MCF 10A (cell line): ENCODE measurements at regions of chr14 and their contacts with region 1.

Region 1: DNA sequence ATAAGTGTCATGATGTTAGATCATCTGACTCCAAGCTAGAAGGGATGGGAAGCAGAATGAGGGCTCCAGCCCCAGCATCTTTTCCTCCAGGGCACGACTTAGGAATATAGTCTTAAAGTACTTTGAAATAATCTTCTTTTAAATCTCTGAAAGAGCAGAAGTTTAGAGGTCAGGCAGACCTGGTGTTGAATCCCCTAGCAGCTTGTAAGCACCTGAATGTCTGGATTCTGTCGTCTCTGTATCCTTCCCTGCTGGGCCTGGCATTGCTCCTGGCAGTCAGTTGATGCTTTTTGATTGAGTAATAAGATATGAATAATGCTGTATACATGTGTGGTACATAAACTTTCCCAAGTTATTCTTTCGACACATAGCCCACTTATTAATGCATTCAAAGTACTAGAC is 31.3 kb downstream of the EVL start:
- DNase-seq: peak; percentile 86
- H3K4me3 Mint-ChIP-seq: no peak overlapping the region
- H3K27ac Mint-ChIP-seq: peak overlapping the region; percentile 81
- H3K4me1 Mint-ChIP-seq: peaks cover 40% of the 10 kb centered on the region
- H3K27me3 Mint-ChIP-seq: no peaks in the 10 kb centered on the region
- CTCF ChIP-seq: no peak

Region 2: DNA sequence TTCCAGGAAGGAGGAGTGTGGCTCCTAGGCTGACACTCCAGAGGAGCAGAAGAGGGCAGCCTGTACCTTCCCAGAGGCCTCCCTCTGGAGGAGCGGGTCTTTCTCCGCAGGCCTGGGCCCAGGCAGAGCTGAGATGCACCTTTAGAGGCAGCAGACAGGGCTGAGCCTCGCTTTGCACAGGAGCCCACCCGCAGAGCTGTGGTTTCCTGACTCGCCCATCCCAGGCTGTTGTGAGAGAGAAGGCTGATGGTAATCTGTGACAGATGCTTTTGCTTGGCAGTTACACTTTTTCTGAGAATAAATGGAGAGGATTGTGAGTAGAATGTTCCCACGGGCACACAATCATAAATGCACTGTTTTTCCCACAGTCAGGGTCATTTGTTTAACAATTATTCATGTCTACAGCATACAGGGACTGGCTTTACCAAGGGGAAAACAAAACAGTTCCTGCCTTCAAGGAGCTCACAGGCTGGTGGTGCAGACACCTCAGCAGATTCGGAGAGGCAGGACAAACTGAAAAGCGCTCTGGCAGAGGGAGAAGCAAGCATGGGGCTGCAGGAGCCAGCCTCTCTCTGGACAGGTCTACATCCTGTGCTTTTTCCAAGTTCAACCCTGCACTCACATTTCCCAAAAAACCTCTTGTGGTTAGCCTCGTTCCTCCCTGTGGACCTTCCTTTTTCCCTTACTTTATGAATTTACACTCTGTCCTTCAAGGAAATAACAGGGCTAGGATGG is 17.4 kb before region 1 on chr14:
- CTCF ChIA-PET with region 1: interaction called, 15 read pairs
- POLR2A ChIA-PET with region 1: interaction called, 24 read pairs
- intact Hi-C with region 1: no loop called
- DNase-seq: peak; percentile 47
- H3K4me3 Mint-ChIP-seq: no peak overlapping the region
- H3K27ac Mint-ChIP-seq: no peak overlapping the region
- H3K4me1 Mint-ChIP-seq: peaks cover 31% of the 10 kb centered on the region
- H3K27me3 Mint-ChIP-seq: no peaks in the 10 kb centered on the region
- CTCF ChIP-seq: no peak

Region 3: DNA sequence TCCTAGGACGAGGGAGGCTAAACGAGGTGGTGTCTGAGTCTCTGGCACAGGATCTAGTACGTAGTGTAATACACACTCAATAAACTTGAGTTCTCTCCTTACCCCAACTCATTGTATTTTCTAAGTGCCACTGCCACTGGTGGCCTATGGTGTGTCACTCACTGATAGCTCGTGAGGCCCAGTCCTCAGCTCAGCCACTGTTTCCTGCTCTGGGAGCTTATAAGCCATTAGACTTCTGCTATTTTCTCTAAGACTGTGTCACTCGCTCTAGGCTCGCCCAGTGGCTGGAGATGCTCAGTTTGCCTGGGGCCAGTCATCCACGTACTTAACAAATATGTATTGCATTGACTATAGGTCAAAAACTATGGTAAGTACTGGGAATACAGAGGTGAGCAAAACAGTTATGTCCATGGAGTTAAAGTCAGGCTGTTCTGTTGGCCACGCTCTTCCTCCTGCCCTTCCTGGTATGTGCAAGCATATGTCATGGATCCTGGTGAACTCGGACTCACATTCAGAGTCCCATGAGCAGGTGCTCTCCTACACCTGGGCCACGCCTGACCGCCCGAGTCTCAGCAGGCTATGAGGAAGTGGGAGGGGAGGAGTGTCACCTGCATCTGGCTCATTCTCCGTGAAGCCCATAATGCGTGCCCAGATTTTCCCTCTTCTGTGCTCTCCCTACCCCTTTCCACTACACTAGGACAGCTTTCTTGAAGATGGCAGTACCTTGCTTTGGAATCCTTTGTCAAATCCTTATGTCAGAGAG is 21.2 kb after region 1 on chr14:
- CTCF ChIA-PET with region 1: no interaction called
- POLR2A ChIA-PET with region 1: no interaction called
- intact Hi-C with region 1: no loop called
- DNase-seq: no peak
- H3K4me3 Mint-ChIP-seq: no peak overlapping the region
- H3K27ac Mint-ChIP-seq: peak overlapping the region; percentile 39
- H3K4me1 Mint-ChIP-seq: no peaks in the 10 kb centered on the region
- H3K27me3 Mint-ChIP-seq: no peaks in the 10 kb centered on the region
- CTCF ChIP-seq: no peak

Region 4: GRCh38 chr14:100317912-100318808 is 221.6 kb after region 1 on chr14:
- CTCF ChIA-PET with region 1: no interaction called
- POLR2A ChIA-PET with region 1: no interaction called
- intact Hi-C with region 1: no loop called
- DNase-seq: no peak
- H3K4me3 Mint-ChIP-seq: no peak overlapping the region
- H3K27ac Mint-ChIP-seq: no peak overlapping the region
- H3K4me1 Mint-ChIP-seq: peaks cover 18% of the 10 kb centered on the region
- H3K27me3 Mint-ChIP-seq: no peaks in the 10 kb centered on the region
- CTCF ChIP-seq: peak; percentile 36

Region 5: DNA sequence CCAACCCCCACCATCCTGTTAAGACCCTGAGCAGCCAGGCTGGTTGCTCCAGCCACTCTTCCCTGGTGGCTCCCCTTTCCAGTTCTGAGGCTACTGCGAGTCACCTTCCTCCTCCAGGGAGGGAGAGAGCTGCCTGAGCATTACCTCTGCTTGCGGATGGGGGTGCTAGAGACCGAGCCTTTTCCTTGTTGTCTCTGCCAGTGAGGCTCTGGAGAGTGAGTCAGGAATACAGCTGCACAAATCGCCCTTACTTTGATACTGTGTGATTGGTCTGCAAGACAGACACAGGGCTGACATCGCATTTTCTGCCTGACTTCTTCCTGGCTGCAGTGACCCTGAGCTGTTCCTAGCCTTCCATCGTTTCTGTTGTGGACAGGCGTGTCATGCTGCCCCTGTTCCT is 320.9 kb after region 1 on chr14:
- CTCF ChIA-PET with region 1: no interaction called
- POLR2A ChIA-PET with region 1: no interaction called
- intact Hi-C with region 1: no loop called
- DNase-seq: peak; percentile 85
- H3K4me3 Mint-ChIP-seq: no peak overlapping the region
- H3K27ac Mint-ChIP-seq: peak overlapping the region; percentile 30
- H3K4me1 Mint-ChIP-seq: peaks cover 21% of the 10 kb centered on the region
- H3K27me3 Mint-ChIP-seq: no peaks in the 10 kb centered on the region
- CTCF ChIP-seq: peak; percentile 70